AG04449 (cell line): ENCODE measurements at regions of chr18 and their contacts with region 1.

Region 1: DNA sequence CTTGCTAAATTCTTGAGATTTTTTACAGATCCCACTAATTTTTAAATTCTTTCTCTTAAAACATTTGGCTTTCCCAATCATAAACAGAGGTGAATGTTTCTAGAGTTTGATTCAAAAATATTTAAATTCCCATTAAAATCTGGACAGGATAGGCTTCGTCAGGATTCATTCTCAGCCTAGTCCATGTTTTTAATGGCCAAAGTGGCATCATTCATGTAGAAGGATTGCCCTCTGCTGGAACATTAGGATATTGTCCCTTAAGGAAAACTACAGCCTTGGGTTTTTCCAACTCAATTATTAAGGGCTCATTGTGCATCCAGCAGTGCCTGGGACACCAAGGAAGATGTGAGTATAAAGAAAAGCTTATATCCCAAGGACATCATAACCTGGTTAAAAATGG is 71.7 kb downstream of the TPGS2 start:
- DNase-seq: peak; percentile 49
- H3K4me3 ChIP-seq: no peak overlapping the region
- CTCF ChIP-seq: peak; percentile 58

Region 2: DNA sequence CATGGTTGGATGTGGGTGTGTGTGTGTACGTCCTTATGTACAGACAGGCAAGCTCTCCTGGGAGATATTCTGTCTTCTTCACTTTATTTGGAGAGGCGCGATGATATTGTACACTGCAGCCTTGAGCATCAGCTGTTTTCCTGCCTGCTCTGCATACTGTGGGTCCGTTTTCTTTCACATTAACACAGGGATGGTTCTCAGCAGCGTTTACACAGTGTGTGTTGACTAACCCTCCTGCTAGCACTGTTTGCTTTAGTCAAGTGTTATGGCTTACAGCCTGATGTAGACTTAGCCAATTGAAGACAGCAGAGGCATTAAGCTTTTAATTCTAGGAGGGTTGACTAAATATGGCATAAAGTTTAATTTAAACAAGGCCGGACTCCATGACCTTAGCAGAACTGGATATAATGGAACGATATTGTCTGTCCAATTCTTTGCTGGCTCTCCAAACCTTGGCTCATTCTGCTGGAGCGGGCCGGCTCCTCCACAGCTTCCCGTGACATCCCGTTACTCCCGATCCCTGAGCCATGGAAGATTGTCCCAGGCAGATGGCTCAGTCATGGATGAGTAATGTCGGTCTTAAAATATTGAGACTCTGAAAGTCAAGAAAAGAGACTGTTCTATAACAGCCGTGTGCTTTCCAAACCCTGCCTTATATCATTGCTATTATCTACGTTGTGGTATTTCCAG is 63.0 kb before region 1 on chr18:
- CTCF ChIA-PET with region 1: interaction called, 113 read pairs
- POLR2A ChIA-PET with region 1: no interaction called
- DNase-seq: no peak
- H3K4me3 ChIP-seq: peak overlapping the region; percentile 56
- CTCF ChIP-seq: no peak

Region 3: DNA sequence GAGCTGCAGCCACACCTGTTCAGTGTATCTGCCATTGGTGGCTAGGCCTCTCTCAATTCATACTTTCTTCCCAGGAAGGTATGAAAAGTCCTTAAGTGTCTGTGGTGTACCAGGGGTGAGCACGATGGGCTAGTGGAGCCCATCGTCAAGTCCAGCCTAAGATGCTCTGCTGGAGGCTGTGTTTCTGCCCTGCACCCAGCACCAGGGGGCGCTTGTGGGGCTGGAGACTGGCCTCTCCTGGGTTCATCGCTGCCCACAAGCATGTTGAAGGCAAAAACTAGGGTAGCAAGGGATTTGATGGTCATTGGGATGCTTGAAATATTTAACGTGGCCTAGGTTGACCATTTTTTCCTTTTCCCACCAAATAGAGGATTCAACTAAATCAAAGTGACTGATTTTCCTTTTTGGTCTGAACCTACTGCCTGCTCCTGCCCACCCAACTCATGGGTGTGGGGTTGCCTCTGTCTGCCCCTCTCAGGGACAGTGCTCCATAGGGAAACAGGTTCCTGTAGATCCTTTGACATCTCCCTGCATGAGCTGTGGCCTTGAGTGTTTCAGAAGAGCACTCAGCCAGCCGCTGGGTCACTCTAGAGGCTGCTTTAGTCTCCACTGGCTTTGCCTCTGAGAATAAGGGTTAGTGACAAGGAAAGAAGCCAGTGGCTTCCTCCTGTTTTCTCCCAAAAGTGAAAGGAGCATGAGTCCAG is 12.7 kb after region 1 on chr18:
- CTCF ChIA-PET with region 1: interaction called, 11 read pairs
- POLR2A ChIA-PET with region 1: no interaction called
- DNase-seq: no peak
- H3K4me3 ChIP-seq: no peak overlapping the region
- CTCF ChIP-seq: no peak